Adrenal gland (tissue), 19 donors: ENCODE measurements at regions of chr2 and their contacts with region 1.

Region 1: GRCh38 chr2:199488772-199489400 is 31.1 kb upstream of the SATB2 start:
- DNase-seq: peak; percentile 47 to 76 (median 71)
- H3K4me3 ChIP-seq: no peak overlapping the region
- H3K27ac ChIP-seq: no peak overlapping the region
- H3K4me1 ChIP-seq: no peaks in the 10 kb centered on the region
- H3K27me3 ChIP-seq: peaks cover 5% of the 10 kb centered on the region
- CTCF ChIP-seq: peak; percentile 44 to 74 (median 56)
- POLR2A ChIP-seq: no peak

Region 2: GRCh38 chr2:198309673-198310280 is 1179.1 kb before region 1 on chr2:
- intact Hi-C with region 1: loop called (anchors 10 kb)
- DNase-seq: peak; percentile 24 to 70 (median 45)
- H3K4me3 ChIP-seq: no peak overlapping the region
- H3K27ac ChIP-seq: no peak overlapping the region
- H3K4me1 ChIP-seq: no peaks in the 10 kb centered on the region
- H3K27me3 ChIP-seq: no peaks in the 10 kb centered on the region
- CTCF ChIP-seq: peak; percentile 39 to 86 (median 57)
- POLR2A ChIP-seq: no peak

Region 3: DNA sequence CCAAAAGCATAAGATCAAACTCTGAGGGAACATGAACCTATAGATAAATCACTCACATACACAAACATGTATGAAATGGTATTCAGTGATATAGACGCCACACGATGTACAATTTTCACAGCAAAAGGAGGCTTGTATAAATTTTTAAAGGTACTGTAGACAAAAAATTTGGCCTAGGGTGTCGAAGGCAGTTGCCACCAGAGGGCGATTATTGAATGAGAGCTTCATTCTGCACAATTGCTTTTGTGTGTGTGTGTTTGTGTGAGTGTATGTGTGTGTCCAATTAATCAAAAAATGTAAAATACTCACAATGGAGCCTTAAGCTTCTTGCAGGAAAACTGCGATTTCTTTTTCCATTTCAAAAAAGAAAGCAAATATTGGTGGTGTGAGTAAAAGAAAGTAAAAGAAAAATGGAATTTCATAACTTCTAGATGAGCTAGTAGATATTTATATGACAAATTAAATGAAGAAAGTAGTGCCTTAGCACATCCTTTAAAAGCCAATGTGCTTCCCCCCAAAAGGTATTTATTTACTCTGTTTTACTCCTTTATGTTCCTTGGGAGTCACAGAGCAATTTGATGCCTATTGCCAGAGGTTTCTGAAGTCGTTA is 831.3 kb before region 1 on chr2:
- intact Hi-C with region 1: loop called in 1 of 2 experiments (anchors 10 kb)
- DNase-seq: peak in 2 of 7 donors; percentile 8 to 15
- H3K4me3 ChIP-seq: no peak overlapping the region
- H3K27ac ChIP-seq: no peak overlapping the region
- H3K4me1 ChIP-seq: no peaks in the 10 kb centered on the region
- H3K27me3 ChIP-seq: no peaks in the 10 kb centered on the region
- CTCF ChIP-seq: peak in 3 of 6 experiments; percentile 6 to 34 (median 17)
- POLR2A ChIP-seq: no peak

Region 4: GRCh38 chr2:199261239-199261638 is 227.6 kb before region 1 on chr2:
- intact Hi-C with region 1: no loop called
- DNase-seq: peak in 4 of 7 donors; percentile 15 to 70 (median 26)
- H3K4me3 ChIP-seq: no peak overlapping the region
- H3K27ac ChIP-seq: no peak overlapping the region
- H3K4me1 ChIP-seq: no peaks in the 10 kb centered on the region
- H3K27me3 ChIP-seq: no peaks in the 10 kb centered on the region
- CTCF ChIP-seq: no peak
- POLR2A ChIP-seq: no peak

Region 5: DNA sequence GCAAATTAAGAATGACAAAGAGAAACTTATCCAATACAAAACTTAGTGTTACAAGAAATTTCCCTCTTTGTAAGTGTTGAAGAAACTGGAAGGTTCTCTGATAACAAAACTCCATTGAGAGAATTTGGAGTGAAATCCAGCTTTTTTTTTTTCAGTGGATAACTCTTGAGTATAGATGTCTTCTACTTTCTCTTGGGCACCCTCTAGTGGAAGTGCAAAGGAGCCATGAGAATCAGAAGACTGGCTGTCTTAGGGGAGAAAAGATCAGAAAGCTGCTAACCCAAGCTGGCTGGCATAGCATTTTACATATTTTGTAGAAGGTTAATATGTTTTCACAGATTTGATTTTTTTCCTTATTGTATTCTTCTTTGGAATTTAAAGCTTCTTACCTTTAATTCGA is 107.7 kb after region 1 on chr2:
- intact Hi-C with region 1: no loop called
- DNase-seq: peak in 3 of 7 donors; percentile 12 to 22 (median 18)
- H3K4me3 ChIP-seq: no peak overlapping the region
- H3K27ac ChIP-seq: no peak overlapping the region
- H3K4me1 ChIP-seq: no peaks in the 10 kb centered on the region
- H3K27me3 ChIP-seq: no peaks in the 10 kb centered on the region
- CTCF ChIP-seq: peak in 4 of 6 experiments; percentile 19 to 36 (median 22)
- POLR2A ChIP-seq: no peak